Ovary (tissue), 10 donors: ENCODE measurements at regions of chr2 and their contacts with region 1.

Region 1: DNA sequence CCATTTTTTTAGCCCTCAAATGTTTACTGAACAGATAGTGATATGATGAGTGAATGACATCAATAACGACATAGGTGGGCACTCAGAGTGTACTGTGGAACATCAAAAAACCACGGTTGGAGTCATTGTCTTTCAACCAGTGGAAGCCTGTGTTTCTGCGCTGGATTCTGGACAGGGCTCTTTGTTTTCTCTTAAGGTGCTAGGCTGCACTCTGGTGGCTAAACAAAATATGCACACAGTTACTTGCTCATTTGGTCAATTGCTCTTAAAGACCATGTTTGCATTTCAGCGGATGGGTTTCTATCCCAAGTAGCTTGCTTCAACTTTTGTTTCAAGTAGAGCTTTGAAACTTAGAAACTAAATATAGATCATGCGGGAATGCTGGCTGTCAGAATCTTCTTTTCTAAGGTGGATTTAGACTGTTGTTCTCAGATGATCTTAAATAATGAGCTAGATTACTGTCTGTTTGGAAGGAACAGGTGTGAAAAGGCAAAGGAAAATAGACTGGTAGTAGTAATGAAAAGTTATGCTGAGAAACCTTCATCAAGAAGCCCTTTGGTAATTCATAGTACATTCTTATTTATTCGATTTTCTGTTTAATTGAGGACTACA is 48.5 kb upstream of the LYPD6B start:
- DNase-seq: peak in 4 of 5 donors; percentile 33 to 66 (median 41)
- H3K4me3 ChIP-seq: no peak overlapping the region
- H3K27ac ChIP-seq: no peak overlapping the region
- H3K4me1 ChIP-seq: no peaks in the 10 kb centered on the region
- H3K27me3 ChIP-seq: no peaks in the 10 kb centered on the region
- CTCF ChIP-seq: peak; percentile 40 to 62 (median 43)
- EP300 ChIP-seq: no peak
- POLR2A ChIP-seq: no peak

Region 2: GRCh38 chr2:147937744-147938349 is 1052.1 kb before region 1 on chr2:
- intact Hi-C with region 1: loop called in 3 of 4 experiments (anchors 5 kb)
- DNase-seq: no peak
- H3K4me3 ChIP-seq: no peak overlapping the region
- H3K27ac ChIP-seq: no peak overlapping the region
- H3K4me1 ChIP-seq: no peaks in the 10 kb centered on the region
- H3K27me3 ChIP-seq: no peaks in the 10 kb centered on the region
- CTCF ChIP-seq: peak; percentile 55 to 81 (median 71)
- EP300 ChIP-seq: no peak
- POLR2A ChIP-seq: no peak

Region 3: DNA sequence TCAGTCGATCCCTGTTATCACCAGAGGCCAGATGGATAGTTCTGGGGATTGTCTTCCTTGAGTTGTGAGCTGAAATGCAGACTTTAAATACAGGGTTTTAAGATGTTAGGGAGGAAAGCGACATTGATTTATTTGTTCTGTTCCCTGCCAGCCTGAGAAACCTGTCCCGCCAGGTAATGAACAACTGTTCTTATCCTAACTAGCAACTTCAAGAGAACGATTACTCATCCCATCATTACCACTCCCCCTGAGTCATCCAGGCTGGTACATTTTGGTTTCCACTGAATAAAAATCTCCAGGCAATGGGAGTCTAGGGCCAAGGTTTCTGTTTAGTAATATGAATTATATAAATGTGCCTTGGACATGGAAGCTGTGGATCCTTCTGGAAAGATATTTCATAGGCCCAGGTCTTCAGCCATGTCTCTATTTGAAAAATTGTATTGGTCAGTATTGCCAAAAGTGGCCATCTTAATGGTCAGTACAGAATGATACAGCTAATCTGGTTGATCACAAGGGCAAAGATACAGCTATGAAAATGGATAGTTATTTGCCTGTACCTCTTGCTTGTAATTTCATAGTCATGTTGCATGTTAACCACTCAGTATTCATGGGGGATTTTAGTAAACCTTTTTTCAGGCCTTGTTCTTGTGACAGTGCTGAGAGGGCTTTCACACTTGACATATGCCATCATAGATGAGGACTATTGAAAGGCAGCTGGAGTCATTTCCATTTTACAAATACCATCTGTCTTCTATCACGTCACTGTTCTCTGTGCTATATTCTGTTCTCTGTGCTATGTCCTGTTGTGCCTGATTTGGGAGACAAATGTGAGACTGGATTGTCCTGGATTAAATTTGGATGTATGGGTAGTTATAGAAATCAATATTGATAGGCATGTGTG is 179.9 kb after region 1 on chr2:
- intact Hi-C with region 1: no loop called
- DNase-seq: no peak
- H3K4me3 ChIP-seq: no peak overlapping the region
- H3K27ac ChIP-seq: no peak overlapping the region
- H3K4me1 ChIP-seq: no peaks in the 10 kb centered on the region
- H3K27me3 ChIP-seq: no peaks in the 10 kb centered on the region
- CTCF ChIP-seq: no peak
- EP300 ChIP-seq: no peak
- POLR2A ChIP-seq: no peak